ENCODE measurements at regions of chr4 and their contacts with region 1.

Region 1: DNA sequence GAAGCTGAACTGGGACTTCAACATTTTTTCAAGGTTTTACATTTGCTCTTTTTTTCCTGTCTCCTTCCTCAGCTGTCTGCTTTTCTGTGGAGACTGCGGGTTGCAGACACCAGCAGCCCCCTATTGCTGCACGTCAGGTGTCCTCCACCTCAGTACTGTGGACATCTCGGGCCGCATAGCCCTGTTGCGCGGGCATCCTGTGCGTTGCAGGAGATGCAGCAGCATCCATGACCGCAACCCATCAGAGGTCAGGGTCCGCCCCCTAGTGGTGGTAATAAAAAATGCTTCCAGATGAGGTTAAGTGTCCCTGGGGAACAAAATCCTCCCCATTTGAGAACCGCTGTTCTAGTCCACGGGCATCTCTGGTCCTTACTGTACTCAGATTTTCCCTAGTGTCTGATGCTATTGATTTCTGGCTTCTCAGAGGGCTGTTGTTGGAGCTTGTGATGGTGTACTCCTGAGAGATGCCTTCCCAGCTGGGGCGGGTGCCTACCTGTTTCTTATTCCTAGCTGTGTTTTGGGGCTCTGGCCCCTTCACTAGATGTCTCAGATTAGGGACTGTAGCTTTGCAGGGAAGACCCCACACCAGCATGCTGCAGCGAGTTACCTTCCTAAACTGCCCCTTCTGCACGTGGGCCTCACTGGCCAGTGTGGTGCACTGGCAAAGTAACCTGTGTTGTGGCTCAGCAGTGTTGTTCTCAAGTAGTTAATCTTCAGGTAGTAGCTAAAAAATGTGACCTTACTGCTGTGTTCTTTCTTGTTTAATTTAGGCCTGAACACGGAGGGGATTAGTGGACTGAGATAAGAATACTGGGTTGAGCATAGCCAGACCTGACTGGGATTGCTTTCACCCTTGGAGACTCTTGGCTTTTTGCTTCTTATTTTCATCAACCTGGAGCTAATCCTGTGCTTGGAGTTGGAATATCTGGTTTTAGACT is 28.2 kb downstream of the NSD2 start:
- DNase-seq: peak; percentile 81
- H3K4me3 Mint-ChIP-seq: no peak overlapping the region
- H3K27ac Mint-ChIP-seq: no peak overlapping the region
- H3K4me1 Mint-ChIP-seq: peaks cover 29% of the 10 kb centered on the region
- H3K27me3 Mint-ChIP-seq: no peaks in the 10 kb centered on the region

Region 2: DNA sequence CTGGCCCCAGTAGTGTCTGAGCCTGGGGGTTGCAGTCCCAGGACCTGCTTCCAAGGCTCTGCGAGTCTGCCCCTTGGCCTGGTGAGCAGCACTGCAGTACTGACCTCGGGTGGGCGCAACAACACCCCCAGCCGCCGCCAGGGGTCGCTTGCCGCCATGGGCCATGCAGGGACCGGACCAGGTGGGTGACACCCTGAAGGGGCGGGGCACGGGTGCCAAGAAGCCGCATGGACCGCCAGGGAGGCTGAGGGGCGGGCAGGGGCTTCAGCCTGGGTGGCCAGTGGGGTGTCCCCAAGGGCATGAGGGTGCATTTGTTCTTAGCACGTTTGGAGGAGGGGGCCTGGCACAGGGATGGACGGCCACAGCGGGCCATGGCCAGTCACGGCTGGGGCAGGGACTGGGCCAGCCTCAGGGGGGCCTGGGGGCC is 153.1 kb before region 1 on chr4:
- CTCF ChIA-PET with region 1: interaction called, 21 read pairs
- POLR2A ChIA-PET with region 1: no interaction called
- intact Hi-C with region 1: loop called (anchors 2 kb)
- DNase-seq: peak; percentile 86
- H3K4me3 Mint-ChIP-seq: no peak overlapping the region
- H3K27ac Mint-ChIP-seq: no peak overlapping the region
- H3K4me1 Mint-ChIP-seq: no peaks in the 10 kb centered on the region
- H3K27me3 Mint-ChIP-seq: no peaks in the 10 kb centered on the region

Region 3: DNA sequence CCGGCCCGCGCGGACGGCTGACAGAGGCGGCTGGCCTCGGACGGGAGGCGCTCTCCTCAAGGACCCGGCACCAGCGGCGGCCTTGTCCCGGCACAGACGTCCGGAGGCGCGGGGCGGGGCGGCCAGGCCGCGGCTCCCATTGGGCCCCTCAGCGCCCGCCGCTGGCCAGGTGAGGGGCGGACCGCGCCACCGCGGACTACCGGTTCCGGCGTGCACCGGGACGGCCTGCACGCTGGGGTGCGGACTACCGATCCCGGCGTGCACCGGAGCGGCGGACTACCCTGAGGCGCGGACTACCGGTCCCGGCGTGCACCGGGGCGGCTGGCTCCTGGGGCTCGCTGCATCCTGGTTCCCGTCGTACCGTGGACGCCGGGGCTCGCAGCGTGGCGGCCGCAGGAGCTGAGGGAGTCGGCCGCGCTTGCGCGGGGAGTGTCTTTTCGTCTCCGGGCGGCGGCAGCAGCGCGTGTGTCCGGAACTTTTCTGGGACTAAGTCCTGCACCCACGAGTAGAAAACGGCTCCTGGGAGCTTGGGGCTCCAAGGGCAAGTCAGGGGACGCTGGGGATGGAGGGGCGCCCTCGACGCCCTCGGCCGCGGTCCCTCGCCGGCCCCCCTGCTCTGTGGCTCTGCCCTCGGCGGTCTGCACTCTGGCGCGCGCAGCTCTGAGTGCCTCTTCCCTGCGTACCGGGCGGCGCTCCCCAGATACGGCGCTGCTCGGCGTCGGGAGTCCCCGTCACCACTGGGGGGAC is 43.2 kb before region 1 on chr4 and contains the start of gene LETM1:
- CTCF ChIA-PET with region 1: interaction called, 55 read pairs
- POLR2A ChIA-PET with region 1: no interaction called
- intact Hi-C with region 1: loop called (anchors 1 kb)
- DNase-seq: peak; percentile 96
- H3K4me3 Mint-ChIP-seq: peak within 1 kb of the TSS; percentile 79
- H3K27ac Mint-ChIP-seq: peak within 1 kb of the TSS; percentile 49
- H3K4me1 Mint-ChIP-seq: peaks cover 32% of the 10 kb centered on the region
- H3K27me3 Mint-ChIP-seq: no peaks in the 10 kb centered on the region
- total RNA-seq, gene LETM1: 41.1 to 42.6 TPM

Region 4: GRCh38 chr4:1870578-1871443 is 28.6 kb before region 1 on chr4 and contains the start of gene NSD2:
- CTCF ChIA-PET with region 1: interaction called, 25 read pairs
- POLR2A ChIA-PET with region 1: interaction called, 8 read pairs
- intact Hi-C with region 1: loop called (anchors 1 kb)
- DNase-seq: peak; percentile 93
- H3K4me3 Mint-ChIP-seq: peak within 1 kb of the TSS; percentile 89
- H3K27ac Mint-ChIP-seq: peak within 1 kb of the TSS; percentile 95
- H3K4me1 Mint-ChIP-seq: peaks cover 33% of the 10 kb centered on the region
- H3K27me3 Mint-ChIP-seq: no peaks in the 10 kb centered on the region
- total RNA-seq, gene NSD2: 197 to 199 TPM

Region 5: DNA sequence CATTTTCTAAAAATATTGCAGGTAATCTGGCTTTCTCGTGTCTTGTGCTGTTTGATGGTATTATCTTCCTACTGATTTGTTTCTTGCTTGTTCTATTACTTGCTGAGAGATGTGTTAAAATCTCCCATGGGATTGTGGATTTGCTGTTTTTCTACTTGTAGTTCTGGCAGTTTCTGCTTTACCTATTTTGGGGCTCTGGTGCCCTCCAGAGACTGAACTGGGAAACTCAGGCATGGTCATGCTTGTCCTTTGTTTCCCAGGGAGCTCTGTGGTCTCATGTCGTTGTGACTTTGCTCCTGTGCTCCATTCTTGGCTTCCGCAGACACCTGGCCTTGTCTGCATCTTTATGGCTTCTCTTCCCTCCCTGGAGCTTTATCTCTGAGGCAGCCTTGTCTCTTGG is 11.2 kb after region 1 on chr4:
- CTCF ChIA-PET with region 1: interaction called, 18 read pairs
- POLR2A ChIA-PET with region 1: no interaction called
- intact Hi-C with region 1: no loop called
- DNase-seq: peak; percentile 34
- H3K4me3 Mint-ChIP-seq: no peak overlapping the region
- H3K27ac Mint-ChIP-seq: no peak overlapping the region
- H3K4me1 Mint-ChIP-seq: peaks cover 23% of the 10 kb centered on the region
- H3K27me3 Mint-ChIP-seq: no peaks in the 10 kb centered on the region

Region 6: DNA sequence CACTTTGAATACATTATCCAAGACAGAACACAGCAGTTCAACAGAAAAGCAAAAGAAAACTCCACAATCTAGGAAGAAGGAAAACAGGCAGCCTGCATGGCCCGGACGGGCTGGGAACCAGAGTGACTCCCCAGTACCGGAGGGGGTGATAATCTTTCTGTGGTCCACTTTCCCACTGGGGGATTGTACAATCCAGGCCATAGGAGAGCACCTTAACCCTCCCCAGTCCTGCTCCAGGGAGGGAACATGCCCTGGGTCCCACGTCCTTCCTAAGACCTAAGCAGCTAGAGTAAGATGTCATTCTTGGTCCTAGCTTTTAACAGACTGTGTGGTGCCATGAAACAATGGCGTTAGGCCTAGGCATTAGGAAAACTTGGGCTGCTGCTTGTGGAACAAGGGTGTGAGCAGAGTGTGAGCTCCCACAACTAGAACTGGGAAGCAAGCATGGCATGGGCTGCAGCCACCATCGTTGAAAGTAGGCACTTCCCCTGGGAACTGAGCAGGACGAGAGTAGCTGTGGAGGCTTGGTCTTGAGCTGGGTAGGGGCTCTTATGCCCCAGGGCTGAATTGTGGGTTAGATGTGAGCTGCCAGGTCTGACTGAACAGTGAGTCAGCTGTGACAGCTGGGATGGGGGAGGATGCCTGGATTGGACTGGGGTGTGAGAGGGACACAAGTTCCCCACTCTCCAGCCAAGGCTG is 202.1 kb after region 1 on chr4:
- CTCF ChIA-PET with region 1: no interaction called
- POLR2A ChIA-PET with region 1: no interaction called
- intact Hi-C with region 1: no loop called
- DNase-seq: no peak
- H3K4me3 Mint-ChIP-seq: no peak overlapping the region
- H3K27ac Mint-ChIP-seq: no peak overlapping the region
- H3K4me1 Mint-ChIP-seq: no peaks in the 10 kb centered on the region
- H3K27me3 Mint-ChIP-seq: no peaks in the 10 kb centered on the region

Measured in activated CD4-positive, alpha-beta memory T cell treated with anti-CD3 and anti-CD28 coated beads for 36 hours (primary cell).